Activated T-helper 2 cell treated with anti-CD3 and anti-CD28 coated beads, Interferon-gamma antibody, Interleukin-2, Interleukin-4, amounts not matched to agents 10 μg/mL and 5 μg/mL and 100 μg/mL, durations not matched to agents 14 hours and 24 hours and 36 hours (primary cell): ENCODE measurements at regions of chr16 and their contacts with region 1.

Region 1: DNA sequence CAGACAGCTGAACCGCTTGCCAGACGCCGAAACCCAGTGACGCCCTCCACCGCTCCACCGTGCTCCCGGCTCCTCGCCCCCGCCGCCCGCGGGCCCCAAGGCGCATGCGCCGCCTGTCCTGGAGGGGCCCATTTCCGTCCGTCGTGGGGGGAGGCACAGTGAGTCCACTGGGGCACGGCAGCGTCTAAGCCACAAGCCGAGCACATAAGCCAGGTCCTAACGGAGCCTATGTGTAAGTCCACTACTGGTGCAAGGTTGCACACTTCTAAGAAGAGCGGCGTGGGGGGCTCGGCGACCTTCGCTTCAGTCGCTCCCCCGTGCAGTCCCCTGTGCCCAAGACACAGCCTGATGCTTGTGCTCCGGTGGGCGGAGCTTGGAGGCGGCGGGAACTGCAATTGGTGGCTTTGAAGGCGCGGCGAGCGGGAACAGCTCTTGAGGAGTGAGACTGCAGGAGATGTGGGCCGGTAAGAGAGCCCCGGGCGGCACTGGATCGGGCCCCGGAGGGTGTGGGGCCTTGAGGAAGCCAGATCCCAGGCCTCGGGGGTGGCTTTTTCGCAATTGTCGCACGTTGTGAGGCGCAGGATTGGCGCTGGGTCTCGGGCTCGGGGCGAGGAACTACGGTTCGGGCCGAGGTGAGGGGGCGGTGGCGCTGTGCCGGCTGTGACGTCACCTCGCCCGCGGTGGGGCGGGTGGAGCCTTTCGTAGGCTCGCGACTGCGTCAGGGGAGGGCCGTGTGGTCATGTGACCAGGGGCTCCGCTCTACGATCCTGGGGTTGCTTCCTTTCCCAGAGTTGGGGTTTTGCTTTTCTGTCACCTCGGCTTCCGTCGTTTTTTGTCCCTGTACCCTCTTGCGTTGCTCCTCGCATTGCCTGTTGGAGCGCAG is at the starts of genes CENPN and CMC2:
- DNase-seq: peak; percentile 98
- H3K4me3 Mint-ChIP-seq: peak within 1 kb of the TSS; percentile 96
- H3K27ac Mint-ChIP-seq: peak within 1 kb of the TSS; percentile 100
- H3K4me1 Mint-ChIP-seq: peaks cover 46% of the 10 kb centered on the region
- H3K27me3 Mint-ChIP-seq: no peaks in the 10 kb centered on the region
- total RNA-seq, gene CENPN: 57.4 and 57.9 TPM in 2 replicates
- total RNA-seq, gene CMC2: 130 and 136 TPM in 2 replicates

Region 2: GRCh38 chr16:80804056-80804450 is 203.0 kb before region 1 on chr16:
- intact Hi-C with region 1: loop called (anchors 10 kb)
- DNase-seq: peak; percentile 53
- H3K4me3 Mint-ChIP-seq: peak overlapping the region; percentile 94
- H3K27ac Mint-ChIP-seq: peak overlapping the region; percentile 90
- H3K4me1 Mint-ChIP-seq: peaks cover 49% of the 10 kb centered on the region
- H3K27me3 Mint-ChIP-seq: no peaks in the 10 kb centered on the region

Region 3: DNA sequence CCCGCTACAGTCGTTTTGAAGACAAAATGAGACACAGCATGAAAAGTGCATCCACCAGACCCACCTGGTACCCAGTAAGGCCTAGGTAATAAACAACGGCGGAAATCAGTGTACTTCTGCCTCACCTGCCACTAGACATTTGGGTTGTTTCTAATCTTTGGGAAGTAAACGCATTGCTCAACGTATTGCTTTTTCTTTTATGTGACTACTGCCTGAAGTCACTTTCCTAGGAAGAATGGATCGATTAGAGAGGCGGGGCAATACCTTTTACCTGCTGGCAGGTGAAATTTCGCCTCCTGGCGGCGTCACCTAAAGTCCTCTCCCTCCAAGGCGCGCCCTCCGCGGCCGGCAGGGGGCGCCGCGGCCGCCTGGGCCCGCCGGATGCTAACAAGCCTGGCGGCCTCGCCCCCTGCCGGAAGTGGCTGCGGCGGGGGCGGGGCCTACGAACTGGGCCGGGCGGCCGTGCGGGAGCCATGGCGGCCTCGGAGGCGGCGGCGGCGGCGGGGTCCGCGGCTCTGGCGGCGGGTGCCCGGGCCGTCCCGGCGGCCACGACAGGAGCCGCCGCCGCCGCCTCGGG is 28.4 kb after region 1 on chr16 and contains the start of gene ATMIN:
- intact Hi-C with region 1: loop called (anchors 1 kb)
- DNase-seq: peak; percentile 80
- H3K4me3 Mint-ChIP-seq: peak within 1 kb of the TSS; percentile 82
- H3K27ac Mint-ChIP-seq: peak within 1 kb of the TSS; percentile 43
- H3K4me1 Mint-ChIP-seq: peaks cover 18% of the 10 kb centered on the region
- H3K27me3 Mint-ChIP-seq: no peaks in the 10 kb centered on the region
- total RNA-seq, gene ATMIN: 25.8 and 27.1 TPM in 2 replicates

Region 4: DNA sequence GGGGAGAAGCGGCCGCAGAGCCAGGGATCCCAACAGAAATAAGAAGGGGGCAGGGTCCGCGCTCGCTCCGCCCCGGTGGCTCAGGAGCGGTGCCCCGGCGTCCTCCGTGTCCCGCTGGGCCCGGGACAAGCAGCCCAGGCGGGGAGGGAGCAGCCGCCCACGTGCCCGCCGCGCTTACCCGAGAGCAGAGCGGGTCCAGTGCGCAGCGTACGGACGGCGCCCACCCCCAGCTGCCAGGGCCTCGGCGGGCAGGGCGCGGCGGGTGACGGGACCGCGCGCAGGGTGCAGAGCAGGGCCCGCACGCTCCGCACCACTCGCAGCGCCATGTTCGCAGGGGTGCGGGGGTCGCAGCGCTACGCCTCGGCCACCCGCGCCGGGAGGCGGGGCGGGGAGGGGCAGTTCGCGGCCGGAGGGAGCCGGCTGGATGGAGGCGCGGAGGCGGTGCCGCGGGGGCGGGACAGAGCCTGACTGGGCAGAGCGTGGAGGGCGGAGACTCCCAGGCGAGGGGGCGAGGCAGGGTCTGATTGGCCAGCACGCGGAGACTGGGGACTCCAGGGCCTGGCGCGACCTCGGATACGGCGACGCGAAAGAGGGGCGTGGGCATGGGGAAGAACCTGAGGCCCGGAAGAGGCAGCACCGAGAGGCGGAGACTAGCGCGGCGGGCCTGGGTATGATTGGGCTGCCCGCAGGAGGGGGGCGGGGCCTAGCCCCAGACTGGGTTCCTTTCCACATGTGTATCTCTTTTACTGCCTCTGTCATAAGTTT is 89.1 kb after region 1 on chr16 and contains the start of gene GCSH:
- intact Hi-C with region 1: loop called (anchors 1 kb)
- DNase-seq: peak; percentile 99
- H3K4me3 Mint-ChIP-seq: peak within 1 kb of the TSS; percentile 77
- H3K27ac Mint-ChIP-seq: peak within 1 kb of the TSS; percentile 61
- H3K4me1 Mint-ChIP-seq: peaks cover 8% of the 10 kb centered on the region
- H3K27me3 Mint-ChIP-seq: no peaks in the 10 kb centered on the region
- total RNA-seq, gene GCSH: 23.2 and 25.7 TPM in 2 replicates

Region 5: DNA sequence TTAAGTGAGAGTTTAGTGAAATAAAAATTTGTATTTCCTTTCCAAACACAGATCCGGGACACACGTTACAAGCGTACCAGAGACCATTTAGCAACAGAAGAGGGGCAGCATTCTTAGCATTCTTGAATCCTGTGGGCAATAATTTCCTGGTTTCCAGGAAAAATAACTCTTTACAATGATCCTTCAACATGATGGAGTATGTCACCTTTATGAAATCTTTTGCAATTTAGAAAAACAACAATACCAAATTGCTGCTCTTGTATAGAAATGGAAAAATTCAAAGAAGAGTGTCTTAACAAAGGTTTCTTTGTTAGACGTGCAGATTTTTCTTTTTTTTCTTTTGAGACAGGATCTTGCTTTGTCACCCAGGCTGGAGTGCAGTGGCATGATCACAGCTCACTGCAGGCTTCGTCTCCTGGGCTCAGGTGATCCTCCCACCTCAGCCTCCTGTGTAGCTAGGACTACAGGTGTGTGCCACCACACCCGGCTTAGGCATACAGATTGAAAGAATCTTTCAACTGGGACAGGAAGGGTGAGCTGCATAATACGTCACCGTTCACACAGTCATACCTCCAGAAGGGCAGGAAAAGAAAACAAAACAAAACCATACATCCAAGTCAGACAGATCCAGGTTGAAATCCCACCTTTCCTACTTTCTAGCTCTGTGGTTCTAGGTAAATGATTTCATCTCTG is 99.9 kb after region 1 on chr16:
- intact Hi-C with region 1: no loop called
- DNase-seq: no peak
- H3K4me3 Mint-ChIP-seq: no peak overlapping the region
- H3K27ac Mint-ChIP-seq: no peak overlapping the region
- H3K4me1 Mint-ChIP-seq: no peaks in the 10 kb centered on the region
- H3K27me3 Mint-ChIP-seq: no peaks in the 10 kb centered on the region

Region 6: GRCh38 chr16:81293909-81294823 is 287.1 kb after region 1 on chr16:
- intact Hi-C with region 1: no loop called
- DNase-seq: no peak
- H3K4me3 Mint-ChIP-seq: no peak overlapping the region
- H3K27ac Mint-ChIP-seq: no peak overlapping the region
- H3K4me1 Mint-ChIP-seq: no peaks in the 10 kb centered on the region
- H3K27me3 Mint-ChIP-seq: peaks cover 3% of the 10 kb centered on the region